CD8-positive, alpha-beta memory T cell (primary cell): ENCODE measurements at regions of chr6 and their contacts with region 1.

Region 1: DNA sequence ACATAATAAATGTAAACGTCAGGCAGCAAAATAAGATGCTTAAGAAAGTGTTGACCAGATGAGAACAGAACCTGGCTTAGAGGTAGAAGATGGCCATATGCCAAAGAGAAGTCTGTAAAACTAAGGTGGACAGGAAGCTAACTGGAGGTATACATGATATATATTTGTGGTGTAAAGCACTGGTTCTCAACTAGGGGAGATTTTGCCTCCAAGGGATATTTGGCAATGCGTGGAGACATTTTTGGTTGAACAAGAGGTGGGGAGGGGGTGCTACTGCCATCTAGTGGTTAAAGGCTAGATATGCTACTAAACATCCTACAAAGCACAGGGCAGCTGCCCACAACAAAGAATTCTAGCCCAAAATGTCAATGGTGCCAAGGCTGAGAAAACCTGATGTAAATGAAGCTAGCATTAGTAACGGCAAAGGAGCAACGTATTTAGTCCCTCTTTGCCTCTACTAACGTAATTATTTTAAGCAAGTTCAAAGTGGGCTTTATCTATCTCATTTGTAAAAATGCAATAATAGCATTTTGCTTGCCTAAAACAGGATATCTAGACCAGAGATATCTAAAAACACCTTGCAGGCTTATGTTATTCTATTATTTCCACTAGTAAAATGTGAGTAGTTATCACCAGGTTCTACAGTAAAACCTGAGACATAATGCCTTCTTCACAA is 182.6 kb downstream of the RNGTT start:
- DNase-seq: peak; percentile 9 to 58 (median 41)
- H3K4me3 ChIP-seq: no peak overlapping the region
- H3K4me3 Mint-ChIP-seq: no peak overlapping the region
- H3K27ac ChIP-seq: no peak overlapping the region
- H3K27ac Mint-ChIP-seq: no peak overlapping the region
- H3K4me1 ChIP-seq: no peaks in the 10 kb centered on the region
- H3K4me1 Mint-ChIP-seq: peaks cover 2 to 5% (median 5%) of the 10 kb centered on the region in 3 donors
- H3K27me3 ChIP-seq: no peaks in the 10 kb centered on the region
- H3K27me3 Mint-ChIP-seq: no peaks in the 10 kb centered on the region

Region 2: GRCh38 chr6:87832025-87832825 is 948.6 kb before region 1 on chr6:
- CTCF ChIA-PET with region 1: interaction called, 11 read pairs
- POLR2A ChIA-PET with region 1: no interaction called
- DNase-seq: peak in 2 of 5 donors; percentile 16 to 27
- H3K4me3 ChIP-seq: peak overlapping the region; percentile 51
- H3K4me3 Mint-ChIP-seq: peak overlapping the region; percentile 90 to 95 (median 93)
- H3K27ac ChIP-seq: no peak overlapping the region
- H3K27ac Mint-ChIP-seq: peak overlapping the region; percentile 62 to 97 (median 94)
- H3K4me1 ChIP-seq: no peaks in the 10 kb centered on the region
- H3K4me1 Mint-ChIP-seq: peaks cover 6 to 12% (median 11%) of the 10 kb centered on the region in 3 donors
- H3K27me3 ChIP-seq: no peaks in the 10 kb centered on the region
- H3K27me3 Mint-ChIP-seq: peaks cover 0 to 5% of the 10 kb centered on the region in 2 donors

Region 3: DNA sequence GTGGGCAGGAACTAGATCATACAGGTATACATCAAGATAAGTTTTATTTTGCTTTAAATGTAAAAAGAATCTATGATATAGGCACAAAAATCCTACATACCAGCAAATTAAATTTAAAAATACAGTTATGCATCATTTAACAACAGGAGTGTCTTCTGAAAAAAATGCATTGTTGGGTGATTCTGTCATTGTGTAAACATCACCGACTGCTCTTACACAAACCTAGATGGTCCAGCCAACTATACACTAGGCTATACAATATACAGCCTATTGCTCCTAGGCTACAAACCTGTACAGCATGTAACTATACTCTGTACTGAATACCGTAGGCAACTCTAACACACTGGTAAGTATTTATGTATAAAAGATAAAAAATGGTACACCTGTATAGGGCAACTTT is 43.1 kb after region 1 on chr6:
- CTCF ChIA-PET with region 1: no interaction called
- POLR2A ChIA-PET with region 1: no interaction called
- DNase-seq: no peak
- H3K4me3 ChIP-seq: no peak overlapping the region
- H3K4me3 Mint-ChIP-seq: no peak overlapping the region
- H3K27ac ChIP-seq: no peak overlapping the region
- H3K27ac Mint-ChIP-seq: no peak overlapping the region
- H3K4me1 ChIP-seq: no peaks in the 10 kb centered on the region
- H3K4me1 Mint-ChIP-seq: peaks cover 20 to 41% (median 34%) of the 10 kb centered on the region in 3 donors
- H3K27me3 ChIP-seq: no peaks in the 10 kb centered on the region
- H3K27me3 Mint-ChIP-seq: peaks cover 0 to 3% of the 10 kb centered on the region in 2 donors

Region 4: DNA sequence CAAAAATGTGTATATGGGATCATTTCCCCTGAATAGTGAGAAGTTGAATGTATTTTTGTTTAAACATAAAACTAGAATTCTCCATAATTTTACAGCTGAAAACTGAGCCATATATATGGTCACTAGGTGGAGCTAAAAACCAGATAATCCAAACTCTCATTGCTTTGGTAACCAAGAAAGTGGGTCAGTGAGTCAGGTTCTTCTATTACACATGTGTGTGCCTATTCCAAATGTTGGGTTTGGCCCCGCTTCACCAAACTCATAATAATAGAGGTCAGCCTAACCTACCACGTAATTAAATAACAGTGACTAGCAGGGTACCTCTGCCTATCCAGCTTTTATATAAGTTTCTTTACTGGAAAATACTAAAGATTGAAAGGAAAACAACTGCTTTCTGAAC is 201.9 kb after region 1 on chr6:
- CTCF ChIA-PET with region 1: no interaction called
- POLR2A ChIA-PET with region 1: no interaction called
- DNase-seq: peak in 2 of 5 donors; percentile 47 to 54
- H3K4me3 ChIP-seq: no peak overlapping the region
- H3K4me3 Mint-ChIP-seq: no peak overlapping the region
- H3K27ac ChIP-seq: no peak overlapping the region
- H3K27ac Mint-ChIP-seq: no peak overlapping the region
- H3K4me1 ChIP-seq: peaks cover 3% of the 10 kb centered on the region
- H3K4me1 Mint-ChIP-seq: no peaks in the 10 kb centered on the region
- H3K27me3 ChIP-seq: no peaks in the 10 kb centered on the region
- H3K27me3 Mint-ChIP-seq: peaks cover 2 to 4% of the 10 kb centered on the region in 2 donors